ENCODE measurements at regions of chr10 and their contacts with region 1.

Region 1: DNA sequence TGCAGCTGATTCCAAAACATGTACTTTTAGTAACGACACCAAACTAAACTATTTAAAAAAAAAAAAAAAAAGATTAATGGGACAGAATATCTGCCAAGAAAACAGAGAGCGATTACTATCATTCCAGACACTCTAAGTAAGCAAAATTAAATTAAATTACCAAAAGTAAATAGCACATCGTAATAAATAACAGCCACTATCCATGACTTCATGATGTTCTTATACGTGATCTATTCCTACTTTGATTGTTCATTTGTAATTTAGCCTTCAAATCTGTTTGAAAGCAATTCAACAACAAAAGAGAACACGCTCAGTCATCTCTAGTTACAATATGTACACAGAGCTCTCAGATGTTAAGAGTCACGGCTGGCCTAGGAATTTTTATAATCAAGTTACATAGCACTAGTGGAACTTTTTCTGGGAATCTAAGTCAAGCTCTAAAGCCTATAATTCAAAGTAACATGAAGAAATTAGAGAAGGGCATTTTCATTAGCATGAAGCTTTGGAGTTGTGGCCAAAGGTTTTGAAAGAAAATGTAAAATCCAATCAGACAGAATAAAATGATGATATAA is 241.7 kb upstream of the NEBL start:
- DNase-seq: no peak
- ATAC-seq: no peak
- H3K4me3 ChIP-seq: no peak overlapping the region
- H3K27ac ChIP-seq: no peak overlapping the region
- H3K4me1 ChIP-seq: no peaks in the 10 kb centered on the region
- H3K27me3 ChIP-seq: peaks cover 0 to 28% of the 10 kb centered on the region in 2 experiments; a peak in 3 of 5 replicates
- CTCF ChIP-seq: no peak
- EP300 ChIP-seq: no peak
- POLR2A ChIP-seq: no peak
- RAD21 ChIP-seq: no peak

Region 2: DNA sequence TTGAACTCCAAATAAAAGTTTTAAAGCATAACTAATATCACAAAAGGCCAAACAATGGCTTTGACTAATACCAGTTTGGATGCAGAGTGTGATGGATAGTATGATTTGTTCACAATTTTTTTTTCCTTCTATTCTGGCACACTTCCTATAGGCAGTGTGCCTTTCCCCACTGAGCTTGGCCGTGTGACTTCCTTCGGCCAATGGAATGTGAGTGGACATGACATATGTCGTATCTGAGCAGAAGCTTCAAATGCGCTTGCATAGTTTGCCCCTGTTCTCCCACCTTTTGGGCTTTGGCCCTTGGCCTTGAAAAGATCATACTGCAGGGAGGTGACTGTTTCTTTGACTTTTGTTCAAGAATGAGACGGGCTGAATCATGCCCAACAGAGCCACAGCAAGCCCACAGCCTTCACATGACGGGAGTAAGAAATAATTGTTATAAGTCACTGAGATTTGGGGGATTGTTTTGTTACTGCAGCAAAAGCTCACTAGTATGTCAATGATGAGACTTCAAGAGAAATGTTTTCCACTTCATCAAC is 38.2 kb after region 1 on chr10:
- CTCF ChIA-PET with region 1: no interaction called
- POLR2A ChIA-PET with region 1: no interaction called
- in situ Hi-C with region 1: no loop called
- intact Hi-C with region 1: loop called (anchors 1 kb)
- DNase-seq: no peak
- ATAC-seq: no peak
- H3K4me3 ChIP-seq: no peak overlapping the region
- H3K27ac ChIP-seq: no peak overlapping the region
- H3K4me1 ChIP-seq: peaks cover 25% of the 10 kb centered on the region
- H3K27me3 ChIP-seq: peaks cover 12 to 48% of the 10 kb centered on the region in 2 experiments; a peak in 4 of 5 replicates
- CTCF ChIP-seq: no peak
- EP300 ChIP-seq: no peak
- POLR2A ChIP-seq: no peak
- RAD21 ChIP-seq: no peak

Region 3: DNA sequence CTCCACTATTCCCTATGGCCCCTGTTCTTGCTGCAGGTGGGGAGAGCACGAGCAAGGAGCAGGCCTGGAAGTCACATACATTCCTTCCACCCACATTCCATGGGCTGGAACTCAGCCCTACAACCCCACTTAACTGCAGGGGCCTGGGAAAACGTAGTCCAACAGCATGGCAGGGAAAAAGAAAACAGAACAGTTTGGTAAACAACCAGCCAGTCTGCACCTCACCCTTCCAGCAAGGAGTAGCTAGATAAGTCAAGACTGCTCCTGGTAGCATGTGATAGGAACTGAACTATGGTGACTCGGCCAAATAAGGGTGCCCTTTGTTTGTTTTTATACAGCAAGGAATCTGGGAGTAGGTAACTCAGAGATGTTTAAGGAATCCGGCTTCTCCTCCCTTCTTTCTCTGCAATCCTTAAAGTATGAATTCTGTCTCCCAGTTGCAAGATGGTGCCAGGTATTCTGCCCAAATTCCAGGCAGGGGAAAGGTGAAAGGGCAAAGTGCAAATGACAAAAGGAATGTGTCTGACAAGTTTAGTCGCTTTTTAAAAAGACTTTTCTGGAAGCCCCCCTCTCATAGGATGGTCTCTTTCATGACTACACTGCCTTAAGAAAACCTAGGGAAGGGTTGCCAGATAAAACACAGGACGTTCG is 69.9 kb after region 1 on chr10:
- CTCF ChIA-PET with region 1: no interaction called
- POLR2A ChIA-PET with region 1: no interaction called
- in situ Hi-C with region 1: no loop called
- intact Hi-C with region 1: no loop called
- DNase-seq: no peak
- ATAC-seq: no peak
- H3K4me3 ChIP-seq: no peak overlapping the region
- H3K27ac ChIP-seq: no peak overlapping the region
- H3K4me1 ChIP-seq: no peaks in the 10 kb centered on the region
- H3K27me3 ChIP-seq: peaks cover 2 to 3% of the 10 kb centered on the region in 2 experiments; a peak in 2 of 5 replicates
- CTCF ChIP-seq: no peak
- EP300 ChIP-seq: no peak
- POLR2A ChIP-seq: no peak
- RAD21 ChIP-seq: no peak

Region 4: GRCh38 chr10:21705142-21705827 is 566.4 kb after region 1 on chr10:
- CTCF ChIA-PET with region 1: no interaction called
- POLR2A ChIA-PET with region 1: no interaction called
- in situ Hi-C with region 1: no loop called
- intact Hi-C with region 1: no loop called
- DNase-seq: no peak
- ATAC-seq: peak; percentile 58
- H3K4me3 ChIP-seq: no peak overlapping the region
- H3K27ac ChIP-seq: no peak overlapping the region
- H3K4me1 ChIP-seq: no peaks in the 10 kb centered on the region; the same call in 1 of the 2 replicates
- H3K27me3 ChIP-seq: no peaks in the 10 kb centered on the region
- CTCF ChIP-seq: no peak
- EP300 ChIP-seq: no peak
- POLR2A ChIP-seq: no peak; a peak in 1 of 4 replicates
- RAD21 ChIP-seq: no peak

Measured in HepG2 (cell line).